Activated CD8-positive, alpha-beta T cell treated with anti-CD3 and anti-CD28 coated beads for 36 hours (primary cell): ENCODE measurements at regions of chr14 and their contacts with region 1.

Region 1: DNA sequence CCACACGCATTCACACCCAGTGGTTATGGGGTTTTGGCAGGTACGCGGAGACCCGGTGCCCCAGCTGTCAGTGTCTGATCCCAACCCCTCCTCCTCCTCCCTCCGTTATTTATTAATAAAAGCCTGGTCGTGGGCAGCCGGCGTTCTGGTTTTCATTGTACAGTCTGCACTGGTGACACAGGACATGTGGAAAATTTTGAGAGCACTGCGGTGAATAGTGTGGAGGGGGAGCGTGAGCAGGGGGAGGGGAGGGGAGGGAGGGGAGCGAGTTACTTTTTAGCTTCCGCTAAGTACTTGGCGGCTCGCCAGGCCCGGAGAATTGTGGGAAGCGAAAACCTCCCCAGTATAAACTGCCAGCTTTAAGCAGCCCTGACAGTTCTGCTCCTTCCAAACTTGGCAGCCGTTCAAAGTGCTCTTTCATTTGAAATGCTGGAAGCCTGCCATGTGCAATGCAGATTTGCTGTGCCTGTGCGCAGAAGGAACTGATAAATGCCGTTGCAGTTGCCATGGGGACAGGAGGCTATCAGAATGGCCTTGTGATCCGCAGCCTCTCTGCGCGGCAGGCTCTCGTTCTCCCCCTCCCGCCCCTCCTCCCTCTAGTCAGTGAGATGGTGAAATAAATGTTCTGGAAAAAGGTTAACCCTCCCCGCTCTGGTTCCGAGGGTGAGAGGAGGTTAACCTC is 11.7 kb upstream of the IRF2BPL start:
- DNase-seq: peak; percentile 97
- ATAC-seq: peak; percentile 66
- H3K4me3 Mint-ChIP-seq: peak overlapping the region; percentile 68
- H3K27ac Mint-ChIP-seq: peak overlapping the region; percentile 96
- H3K4me1 Mint-ChIP-seq: peaks cover 82% of the 10 kb centered on the region
- H3K27me3 Mint-ChIP-seq: no peaks in the 10 kb centered on the region
- CTCF ChIP-seq: no peak

Region 2: DNA sequence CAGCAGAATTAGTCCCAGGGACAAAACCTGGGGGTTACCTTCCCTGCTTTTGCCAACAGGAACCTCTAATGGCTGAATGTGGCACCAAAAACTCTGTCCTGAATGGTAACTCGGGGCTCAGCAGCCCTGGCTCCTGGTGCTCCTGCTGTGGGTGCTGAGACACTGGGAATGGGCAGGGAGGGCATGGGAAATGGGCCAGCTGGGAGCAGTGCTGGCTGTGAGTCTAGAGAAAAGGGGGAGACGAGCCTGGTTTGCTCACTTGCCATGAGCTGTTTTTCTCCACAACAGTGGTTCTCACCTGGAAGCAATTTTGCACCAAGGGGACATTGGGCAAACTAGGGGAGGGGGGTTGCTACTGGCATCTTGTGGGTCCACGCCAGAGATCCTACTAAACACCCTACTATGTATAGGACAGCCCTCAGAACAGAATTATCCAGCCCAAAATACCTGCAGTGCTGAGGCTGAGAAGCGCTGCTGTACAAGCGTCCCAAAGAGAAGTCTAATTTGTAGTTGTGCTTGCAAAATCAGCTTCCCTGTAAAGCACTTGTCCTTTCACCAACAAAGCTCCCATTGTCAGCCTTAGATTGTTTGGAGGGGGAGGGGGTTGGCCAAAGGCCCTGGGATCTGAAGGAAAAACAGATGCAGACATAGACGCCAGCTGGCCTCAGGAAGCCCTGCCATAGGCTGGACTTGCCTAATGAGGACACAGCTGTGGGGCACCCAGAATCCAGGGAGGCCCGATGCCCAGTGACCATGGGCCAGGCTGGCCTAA is 210.4 kb before region 1 on chr14:
- CTCF ChIA-PET with region 1: no interaction called
- POLR2A ChIA-PET with region 1: no interaction called
- intact Hi-C with region 1: no loop called
- DNase-seq: no peak
- ATAC-seq: no peak
- H3K4me3 Mint-ChIP-seq: no peak overlapping the region
- H3K27ac Mint-ChIP-seq: no peak overlapping the region
- H3K4me1 Mint-ChIP-seq: no peaks in the 10 kb centered on the region
- H3K27me3 Mint-ChIP-seq: no peaks in the 10 kb centered on the region
- CTCF ChIP-seq: no peak

Region 3: DNA sequence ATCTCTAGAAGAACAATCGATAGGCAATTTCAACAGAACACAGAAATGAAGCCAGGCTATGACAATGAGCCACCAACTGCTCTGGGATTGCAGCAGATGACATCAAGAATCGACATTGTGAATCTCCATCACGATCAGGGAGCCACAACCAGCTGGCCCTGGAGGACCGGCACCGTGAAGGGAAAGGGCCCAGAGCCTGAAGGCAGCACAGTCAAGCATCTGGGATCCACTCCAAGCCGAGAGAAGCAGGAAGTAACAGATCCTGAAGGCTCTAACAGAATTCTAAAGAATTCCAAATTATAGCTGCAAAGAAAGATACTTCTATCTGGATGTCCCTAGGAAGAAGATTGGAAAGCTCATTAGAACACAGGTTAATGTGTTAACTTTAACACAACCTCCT is 153.0 kb before region 1 on chr14:
- CTCF ChIA-PET with region 1: no interaction called
- POLR2A ChIA-PET with region 1: no interaction called
- intact Hi-C with region 1: no loop called
- DNase-seq: no peak
- ATAC-seq: no peak
- H3K4me3 Mint-ChIP-seq: no peak overlapping the region
- H3K27ac Mint-ChIP-seq: no peak overlapping the region
- H3K4me1 Mint-ChIP-seq: peaks cover 8% of the 10 kb centered on the region
- H3K27me3 Mint-ChIP-seq: no peaks in the 10 kb centered on the region
- CTCF ChIP-seq: no peak

Region 4: DNA sequence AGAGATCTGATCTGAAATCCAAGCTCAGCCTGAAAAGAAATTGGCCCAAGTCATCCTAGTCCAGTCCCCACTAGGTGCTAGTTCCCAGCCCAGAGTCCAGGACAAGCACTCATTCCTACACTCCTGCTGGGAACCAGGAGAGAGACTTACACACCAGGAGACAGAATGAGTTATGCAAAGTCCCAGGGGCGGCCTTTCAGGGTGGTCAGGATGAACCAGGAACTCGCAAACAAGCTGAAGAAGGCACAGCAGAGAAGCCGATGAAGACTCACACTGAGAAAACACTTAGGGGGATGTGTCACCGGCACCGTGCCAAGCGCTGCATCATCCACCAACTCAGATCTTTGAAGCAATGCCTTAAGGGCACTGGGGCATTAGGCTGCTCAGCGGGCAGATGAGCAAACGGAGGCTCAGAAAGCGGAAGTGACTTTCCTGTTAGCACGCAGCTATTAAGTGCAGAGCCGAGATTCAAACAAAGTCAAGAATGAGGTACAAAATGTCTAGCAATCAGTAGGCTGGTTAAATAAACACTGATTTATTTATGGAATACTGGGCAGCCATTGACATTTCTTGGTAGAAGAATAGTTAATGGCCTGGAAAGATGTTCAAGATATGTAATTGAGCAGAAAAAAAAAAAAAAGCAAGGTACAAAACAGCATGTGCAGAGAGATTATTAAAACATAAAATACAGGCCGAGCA is 135.3 kb before region 1 on chr14:
- CTCF ChIA-PET with region 1: interaction called, 63 read pairs
- POLR2A ChIA-PET with region 1: interaction called, 3 read pairs
- intact Hi-C with region 1: no loop called
- DNase-seq: peak; percentile 95
- ATAC-seq: peak; percentile 93
- H3K4me3 Mint-ChIP-seq: no peak overlapping the region
- H3K27ac Mint-ChIP-seq: peak overlapping the region; percentile 76
- H3K4me1 Mint-ChIP-seq: peaks cover 18% of the 10 kb centered on the region
- H3K27me3 Mint-ChIP-seq: no peaks in the 10 kb centered on the region
- CTCF ChIP-seq: no peak

Region 5: GRCh38 chr14:76956316-76957090 is 83.7 kb before region 1 on chr14:
- CTCF ChIA-PET with region 1: interaction called, 7 read pairs
- POLR2A ChIA-PET with region 1: interaction called, 42 read pairs
- intact Hi-C with region 1: no loop called
- DNase-seq: peak; percentile 96
- ATAC-seq: peak; percentile 64
- H3K4me3 Mint-ChIP-seq: peak overlapping the region; percentile 79
- H3K27ac Mint-ChIP-seq: peak overlapping the region; percentile 94
- H3K4me1 Mint-ChIP-seq: peaks cover 68% of the 10 kb centered on the region
- H3K27me3 Mint-ChIP-seq: no peaks in the 10 kb centered on the region
- CTCF ChIP-seq: no peak

Region 6: DNA sequence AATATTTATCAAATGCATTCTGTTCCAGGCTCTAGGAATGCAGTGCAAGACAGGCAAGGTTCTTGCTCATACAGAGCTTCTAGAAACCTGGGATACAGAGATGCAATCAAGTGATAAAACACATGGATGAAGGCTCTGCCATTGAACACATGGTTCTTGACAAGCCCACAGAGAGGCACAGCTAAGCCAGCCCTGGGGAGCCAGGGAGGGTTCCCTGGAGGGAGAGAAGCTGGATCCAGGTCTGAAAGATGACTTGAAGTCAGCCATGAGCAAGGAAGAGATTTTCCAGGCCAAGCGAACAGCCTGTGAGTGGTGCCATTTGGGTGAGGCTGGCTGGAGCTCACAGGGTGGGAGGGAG is 77.9 kb before region 1 on chr14:
- CTCF ChIA-PET with region 1: interaction called, 7 read pairs
- POLR2A ChIA-PET with region 1: interaction called, 42 read pairs
- intact Hi-C with region 1: no loop called
- DNase-seq: peak; percentile 14
- ATAC-seq: peak; percentile 4
- H3K4me3 Mint-ChIP-seq: peak overlapping the region; percentile 75
- H3K27ac Mint-ChIP-seq: peak overlapping the region; percentile 100
- H3K4me1 Mint-ChIP-seq: peaks cover 88% of the 10 kb centered on the region
- H3K27me3 Mint-ChIP-seq: peaks cover 2% of the 10 kb centered on the region
- CTCF ChIP-seq: no peak

Region 7: GRCh38 chr14:77028384-77029231 is 11.6 kb before region 1 on chr14 and contains the start of gene IRF2BPL:
- CTCF ChIA-PET with region 1: interaction called, 36 read pairs
- POLR2A ChIA-PET with region 1: interaction called, 36 read pairs
- intact Hi-C with region 1: no loop called
- DNase-seq: peak; percentile 95
- ATAC-seq: peak; percentile 73
- H3K4me3 Mint-ChIP-seq: peak within 1 kb of the TSS; percentile 97
- H3K27ac Mint-ChIP-seq: peak within 1 kb of the TSS; percentile 94
- H3K4me1 Mint-ChIP-seq: peaks cover 51% of the 10 kb centered on the region
- H3K27me3 Mint-ChIP-seq: no peaks in the 10 kb centered on the region
- CTCF ChIP-seq: no peak
- total RNA-seq, gene IRF2BPL: 36.2 to 37.7 TPM

Region 8: DNA sequence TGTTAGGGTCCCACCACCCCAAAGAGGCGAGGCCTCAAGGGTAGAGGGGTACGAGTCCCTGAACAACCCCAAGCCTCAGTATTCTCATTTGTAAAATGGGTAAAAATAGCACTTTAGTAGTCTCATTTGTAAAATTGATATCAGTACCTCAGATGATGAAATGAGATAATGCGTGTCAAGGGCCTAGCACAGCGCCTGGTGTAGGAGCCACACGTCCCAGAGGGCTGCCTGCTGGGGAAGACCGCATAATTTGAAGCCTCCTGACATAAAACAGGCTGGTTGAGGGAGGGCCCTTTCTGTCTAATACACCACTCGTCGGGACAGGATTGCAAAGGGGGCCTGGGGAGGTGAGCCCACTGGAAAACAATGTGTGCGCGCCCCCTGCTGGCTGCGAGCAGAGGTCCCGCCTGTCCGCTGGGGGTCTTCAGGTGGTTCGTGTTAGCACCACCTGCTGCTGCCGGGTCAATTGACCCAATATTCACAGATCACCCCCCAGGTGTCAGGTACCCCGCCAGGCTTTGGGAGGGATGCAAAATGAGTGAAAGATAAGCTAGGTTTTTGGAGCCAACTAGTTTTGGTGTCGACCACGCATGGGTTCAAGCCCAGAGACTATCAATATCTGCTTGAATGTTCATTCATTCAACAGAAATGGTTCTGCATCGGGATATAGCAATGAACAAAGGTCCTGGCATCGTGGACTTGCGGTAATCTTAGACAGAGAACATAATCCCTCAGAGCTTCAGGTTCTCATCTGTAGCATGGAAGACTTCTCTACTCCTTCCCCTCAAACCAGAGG is 13.0 kb after region 1 on chr14:
- CTCF ChIA-PET with region 1: interaction called, 55 read pairs
- POLR2A ChIA-PET with region 1: interaction called, 3 read pairs
- intact Hi-C with region 1: no loop called
- DNase-seq: peak; percentile 90
- ATAC-seq: peak; percentile 93
- H3K4me3 Mint-ChIP-seq: no peak overlapping the region
- H3K27ac Mint-ChIP-seq: peak overlapping the region; percentile 75
- H3K4me1 Mint-ChIP-seq: peaks cover 17% of the 10 kb centered on the region
- H3K27me3 Mint-ChIP-seq: no peaks in the 10 kb centered on the region
- CTCF ChIP-seq: peak; percentile 100

Region 9: DNA sequence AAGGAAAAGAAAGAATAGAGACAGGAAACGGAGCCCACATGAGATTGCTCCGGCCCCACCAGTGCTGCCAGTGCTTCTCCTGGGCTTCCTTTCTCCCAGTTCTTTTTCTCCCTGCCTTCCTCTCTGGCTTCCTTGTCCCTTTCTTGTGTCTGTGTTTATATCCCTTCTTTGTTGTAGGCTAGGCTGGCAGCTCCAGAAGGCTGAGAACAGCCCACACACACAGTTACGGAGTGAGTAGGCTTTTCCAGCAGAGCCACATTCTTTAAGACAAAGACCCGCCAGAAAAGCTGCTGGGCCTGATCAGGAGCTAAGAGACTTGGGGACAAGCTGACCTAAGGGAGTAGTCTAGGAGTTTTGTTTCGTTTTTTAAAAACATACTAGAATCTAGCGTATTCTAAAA is 70.8 kb after region 1 on chr14:
- CTCF ChIA-PET with region 1: no interaction called
- POLR2A ChIA-PET with region 1: no interaction called
- intact Hi-C with region 1: no loop called
- DNase-seq: no peak
- ATAC-seq: no peak
- H3K4me3 Mint-ChIP-seq: no peak overlapping the region
- H3K27ac Mint-ChIP-seq: no peak overlapping the region
- H3K4me1 Mint-ChIP-seq: no peaks in the 10 kb centered on the region
- H3K27me3 Mint-ChIP-seq: no peaks in the 10 kb centered on the region
- CTCF ChIP-seq: no peak